ENCODE measurements at regions of chr9 and their contacts with region 1.

Region 1: GRCh38 chr9:133992780-133993634 is 883 bp upstream of the VAV2 start:
- DNase-seq: peak; percentile 61

Region 2: GRCh38 chr9:133532937-133533668 is 459.9 kb before region 1 on chr9:
- in situ Hi-C with region 1: loop called (anchors 25 kb)
- DNase-seq: peak; percentile 80

Region 3: GRCh38 chr9:133770076-133770777 is 222.8 kb before region 1 on chr9:
- in situ Hi-C with region 1: loop called (anchors 10 kb)
- DNase-seq: no peak